ENCODE measurements at regions of chr1 and their contacts with region 1.

Region 1: GRCh38 chr1:218429301-218429700 is 84.2 kb downstream of the TGFB2 start:
- DNase-seq: peak; percentile 40
- ATAC-seq: no peak
- H3K4me3 ChIP-seq: no peak overlapping the region
- H3K27ac ChIP-seq: no peak overlapping the region
- H3K4me1 ChIP-seq: peaks cover 5% of the 10 kb centered on the region; the same call in 1 of the 2 replicates
- H3K27me3 ChIP-seq: no peaks in the 10 kb centered on the region
- CTCF ChIP-seq: no peak
- POLR2A ChIP-seq: no peak
- RAD21 ChIP-seq: no peak

Region 2: DNA sequence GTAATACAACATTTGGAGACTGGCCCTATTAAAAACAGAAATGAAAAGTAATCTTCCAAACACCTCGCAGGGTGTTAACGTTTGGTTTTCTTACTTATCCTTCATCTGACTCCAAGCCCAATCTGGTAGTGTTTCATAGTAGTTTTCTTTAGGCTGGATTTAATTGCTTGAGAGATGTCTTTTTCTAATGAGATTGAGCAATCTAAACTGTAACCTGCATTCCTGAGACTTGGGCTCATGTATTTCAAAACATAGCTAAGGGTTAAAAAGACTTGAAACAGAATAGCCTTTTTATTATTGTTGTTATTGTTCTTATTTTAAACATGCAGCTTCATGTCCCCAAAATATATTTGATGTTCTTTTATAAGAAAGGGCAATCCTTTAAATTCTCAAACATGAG is 194.7 kb after region 1 on chr1:
- CTCF ChIA-PET with region 1: no interaction called
- POLR2A ChIA-PET with region 1: interaction called, 12 read pairs
- dilution Hi-C with region 1: no loop called
- in situ Hi-C with region 1: no loop called
- intact Hi-C with region 1: no loop called
- DNase-seq: no peak
- ATAC-seq: no peak
- H3K4me3 ChIP-seq: no peak overlapping the region
- H3K27ac ChIP-seq: no peak overlapping the region
- H3K4me1 ChIP-seq: no peaks in the 10 kb centered on the region
- H3K27me3 ChIP-seq: no peaks in the 10 kb centered on the region
- CTCF ChIP-seq: no peak
- POLR2A ChIP-seq: no peak
- RAD21 ChIP-seq: no peak